Activated CD4-positive, alpha-beta T cell treated with anti-CD3 and anti-CD28 coated beads, Interleukin-2, amount 10 ng/mL, durations not matched to agents 24 days and 14 days (primary cell): ENCODE measurements at regions of chr11 and their contacts with region 1.

Region 1: GRCh38 chr11:61816736-61817455 is at the start of gene FADS1:
- DNase-seq: peak; percentile 95
- H3K4me3 Mint-ChIP-seq: peak within 1 kb of the TSS; percentile 97
- H3K27ac Mint-ChIP-seq: peak within 1 kb of the TSS; percentile 94
- H3K4me1 Mint-ChIP-seq: peaks cover 20% of the 10 kb centered on the region
- H3K27me3 Mint-ChIP-seq: peaks cover 2% of the 10 kb centered on the region
- total RNA-seq, gene FADS1: 92.5 and 94.7 TPM in 2 replicates

Region 2: DNA sequence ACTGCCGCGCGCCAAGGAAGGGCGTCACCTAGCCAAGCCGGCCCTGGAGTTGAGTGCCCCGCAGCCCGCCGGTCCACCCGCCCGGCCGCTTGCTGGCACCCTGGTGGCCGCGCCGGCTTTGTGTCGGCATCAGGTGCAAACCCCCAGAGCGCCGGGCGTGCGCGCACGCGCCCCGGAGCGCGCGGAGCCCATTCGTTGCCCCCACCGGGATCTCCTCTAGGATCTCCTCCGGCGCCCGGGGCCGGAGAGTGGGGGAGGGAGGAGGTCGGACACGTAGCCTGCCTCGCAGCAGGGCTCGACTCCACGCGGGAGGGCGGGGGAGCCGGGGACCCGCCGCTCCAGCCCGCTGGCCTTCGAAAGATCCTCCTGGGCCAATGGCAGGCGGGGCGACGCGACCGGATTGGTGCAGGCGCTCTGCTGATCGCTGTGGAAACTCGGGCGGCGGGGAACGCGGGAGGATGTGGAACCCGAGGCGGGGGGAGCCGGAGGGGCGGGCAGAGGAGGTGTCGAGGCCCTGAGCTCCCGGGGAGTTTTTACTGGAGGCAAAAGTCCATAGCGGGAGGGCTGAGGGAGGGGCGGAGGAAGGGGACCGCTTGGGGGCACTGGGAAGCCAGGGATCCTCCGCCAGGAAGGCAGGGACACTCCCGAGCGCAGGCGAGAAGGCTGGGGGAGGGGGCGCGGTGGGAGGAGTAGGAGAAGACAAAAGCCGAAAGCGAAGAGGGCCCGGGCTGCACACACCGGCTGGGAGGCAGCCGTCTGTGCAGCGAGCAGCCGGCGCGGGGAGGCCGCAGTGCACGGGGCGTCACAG is 10.9 kb after region 1 on chr11 and contains the start of gene FADS2:
- intact Hi-C with region 1: loop called (anchors 1 kb)
- DNase-seq: peak; percentile 98
- H3K4me3 Mint-ChIP-seq: peak within 1 kb of the TSS; percentile 92
- H3K27ac Mint-ChIP-seq: peak within 1 kb of the TSS; percentile 95
- H3K4me1 Mint-ChIP-seq: peaks cover 44% of the 10 kb centered on the region
- H3K27me3 Mint-ChIP-seq: no peaks in the 10 kb centered on the region
- total RNA-seq, gene FADS2: 278 and 283 TPM in 2 replicates

Region 3: DNA sequence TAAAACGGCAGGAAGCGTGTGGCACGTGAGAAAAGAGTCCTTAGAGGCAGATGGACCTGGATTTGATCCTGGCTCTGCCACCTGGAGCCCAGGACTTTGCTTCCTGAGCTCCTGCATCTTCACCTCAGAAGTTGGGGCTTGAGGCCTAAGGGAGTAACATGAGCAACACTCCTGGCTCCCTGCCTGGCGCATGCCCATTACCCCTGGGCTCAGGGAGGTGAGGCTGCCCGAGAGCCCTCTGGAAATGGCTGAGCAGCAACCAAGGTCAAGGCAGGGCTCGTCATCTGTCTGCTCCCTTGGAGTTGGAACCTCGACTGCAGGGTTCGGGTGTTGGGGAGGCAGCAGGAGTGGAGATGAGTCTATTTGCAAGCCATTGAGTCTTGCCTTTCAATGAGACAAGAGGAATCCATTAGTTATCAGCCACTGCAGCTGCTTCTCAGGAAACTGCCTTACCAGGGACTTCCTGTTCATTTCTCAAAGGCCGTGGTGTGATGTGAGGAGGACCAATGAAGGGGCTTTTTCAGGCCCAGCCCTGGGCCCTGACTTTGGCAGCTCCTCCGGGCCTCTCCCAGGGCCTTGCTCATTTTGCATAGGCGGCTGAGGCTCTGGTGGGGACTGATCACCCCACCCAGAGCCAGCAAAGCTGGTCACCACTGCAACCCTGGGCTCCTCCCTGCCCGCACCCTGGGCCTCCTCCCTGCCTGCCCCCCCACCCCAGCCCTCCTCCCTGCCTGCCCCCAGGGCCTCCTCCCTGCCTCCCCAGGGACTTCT is 17.6 kb after region 1 on chr11:
- intact Hi-C with region 1: loop called (anchors 2 kb)
- DNase-seq: peak; percentile 92
- H3K4me3 Mint-ChIP-seq: peak overlapping the region; percentile 71
- H3K27ac Mint-ChIP-seq: peak overlapping the region; percentile 93
- H3K4me1 Mint-ChIP-seq: peaks cover 59% of the 10 kb centered on the region
- H3K27me3 Mint-ChIP-seq: no peaks in the 10 kb centered on the region

Region 4: GRCh38 chr11:61891331-61892084 is 74.6 kb after region 1 on chr11 and contains the start of gene FADS3:
- intact Hi-C with region 1: loop called (anchors 1 kb)
- DNase-seq: peak; percentile 92
- H3K4me3 Mint-ChIP-seq: peak within 1 kb of the TSS; percentile 83
- H3K27ac Mint-ChIP-seq: peak within 1 kb of the TSS; percentile 29
- H3K4me1 Mint-ChIP-seq: peaks cover 4% of the 10 kb centered on the region
- H3K27me3 Mint-ChIP-seq: peaks cover 13% of the 10 kb centered on the region
- total RNA-seq, gene FADS3: 13.5 and 15.6 TPM in 2 replicates

Region 5: GRCh38 chr11:61985885-61986345 is 169.0 kb after region 1 on chr11:
- intact Hi-C with region 1: no loop called
- DNase-seq: no peak
- H3K4me3 Mint-ChIP-seq: no peak overlapping the region
- H3K27ac Mint-ChIP-seq: no peak overlapping the region
- H3K4me1 Mint-ChIP-seq: no peaks in the 10 kb centered on the region
- H3K27me3 Mint-ChIP-seq: peaks cover 36% of the 10 kb centered on the region

Region 6: GRCh38 chr11:62123669-62124185 is 306.8 kb after region 1 on chr11 and contains the start of gene INCENP:
- intact Hi-C with region 1: no loop called
- DNase-seq: peak; percentile 98
- H3K4me3 Mint-ChIP-seq: peak within 1 kb of the TSS; percentile 88
- H3K27ac Mint-ChIP-seq: peak within 1 kb of the TSS; percentile 81
- H3K4me1 Mint-ChIP-seq: peaks cover 30% of the 10 kb centered on the region
- H3K27me3 Mint-ChIP-seq: peaks cover 3% of the 10 kb centered on the region
- total RNA-seq, gene INCENP: 95.0 and 102 TPM in 2 replicates